Mammary epithelial cell (primary cell): ENCODE measurements at regions of chr2 and their contacts with region 1.

Region 1: DNA sequence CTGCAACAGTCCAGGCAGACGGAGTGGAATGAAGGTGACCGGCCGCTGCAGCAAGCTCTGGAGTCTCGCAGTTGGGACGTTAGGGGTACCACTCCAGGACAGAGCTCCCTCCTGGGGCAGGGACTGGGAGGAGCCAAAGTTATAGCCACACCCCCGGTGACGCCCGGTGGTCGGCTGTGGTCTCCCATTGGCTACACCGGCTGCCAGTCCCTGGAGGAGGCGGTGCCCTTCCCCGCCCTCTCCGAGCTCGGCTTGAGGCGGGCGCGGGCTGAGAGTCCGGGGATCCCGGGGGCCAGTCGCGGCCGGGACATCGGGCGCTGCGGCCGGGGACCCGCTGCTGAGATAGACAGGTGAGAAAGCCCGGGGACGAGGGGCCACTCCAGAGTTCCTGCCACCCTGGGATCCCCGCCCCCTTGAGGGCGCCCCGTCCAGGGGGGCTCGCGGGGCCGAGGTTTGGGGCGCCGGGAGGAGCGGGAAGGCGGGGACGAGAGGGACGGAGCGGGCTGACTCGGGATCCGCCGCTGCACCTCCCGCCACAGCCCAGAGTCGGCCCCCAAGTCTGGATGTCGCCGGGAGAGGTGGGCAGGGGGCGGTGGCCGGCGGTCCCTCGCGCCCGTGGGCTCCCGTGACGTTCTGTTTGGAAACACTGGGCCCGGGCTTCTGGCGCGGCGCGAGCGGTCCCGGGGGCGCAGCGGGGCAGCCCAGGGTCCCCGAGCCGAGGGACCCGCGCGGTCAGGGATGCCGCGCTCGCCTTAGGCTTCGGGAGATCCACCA is at the start of gene PLEKHH2:
- DNase-seq: peak; percentile 79
- H3K4me3 ChIP-seq: peak within 1 kb of the TSS; percentile 71 to 85 (median 76)
- H3K27ac ChIP-seq: no peak within 1 kb of the TSS
- H3K4me1 ChIP-seq: peaks cover 20% of the 10 kb centered on the region
- H3K27me3 ChIP-seq: no peaks in the 10 kb centered on the region
- CTCF ChIP-seq: peak in 1 of 2 donors; percentile 3
- total RNA-seq, gene PLEKHH2: 1.3 to 2.7 TPM

Region 2: DNA sequence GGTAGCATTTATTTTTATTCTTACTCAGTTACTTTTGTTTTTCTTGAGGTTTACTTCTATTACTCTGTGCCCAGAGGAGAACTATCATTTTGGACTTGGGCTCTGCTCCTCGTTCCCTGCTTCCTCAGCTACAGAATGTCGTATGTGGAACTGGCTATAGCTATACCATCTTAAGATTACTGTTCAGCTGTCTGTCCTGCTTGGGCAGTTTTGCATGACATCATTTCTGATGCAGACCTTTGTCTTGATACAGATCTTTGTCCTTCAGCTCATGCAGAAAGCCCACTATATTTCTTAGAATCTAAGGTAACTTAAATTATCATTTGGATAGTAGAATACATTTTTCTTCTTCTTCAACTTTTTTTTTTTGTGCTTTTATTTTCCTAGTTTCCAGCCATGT is 52.8 kb after region 1 on chr2:
- CTCF ChIA-PET with region 1: no interaction called
- dilution Hi-C with region 1: no loop called
- in situ Hi-C with region 1: no loop called
- intact Hi-C with region 1: no loop called
- DNase-seq: no peak
- H3K4me3 ChIP-seq: no peak overlapping the region
- H3K27ac ChIP-seq: no peak overlapping the region
- H3K4me1 ChIP-seq: no peaks in the 10 kb centered on the region
- H3K27me3 ChIP-seq: peaks cover 4% of the 10 kb centered on the region
- CTCF ChIP-seq: no peak

Region 3: DNA sequence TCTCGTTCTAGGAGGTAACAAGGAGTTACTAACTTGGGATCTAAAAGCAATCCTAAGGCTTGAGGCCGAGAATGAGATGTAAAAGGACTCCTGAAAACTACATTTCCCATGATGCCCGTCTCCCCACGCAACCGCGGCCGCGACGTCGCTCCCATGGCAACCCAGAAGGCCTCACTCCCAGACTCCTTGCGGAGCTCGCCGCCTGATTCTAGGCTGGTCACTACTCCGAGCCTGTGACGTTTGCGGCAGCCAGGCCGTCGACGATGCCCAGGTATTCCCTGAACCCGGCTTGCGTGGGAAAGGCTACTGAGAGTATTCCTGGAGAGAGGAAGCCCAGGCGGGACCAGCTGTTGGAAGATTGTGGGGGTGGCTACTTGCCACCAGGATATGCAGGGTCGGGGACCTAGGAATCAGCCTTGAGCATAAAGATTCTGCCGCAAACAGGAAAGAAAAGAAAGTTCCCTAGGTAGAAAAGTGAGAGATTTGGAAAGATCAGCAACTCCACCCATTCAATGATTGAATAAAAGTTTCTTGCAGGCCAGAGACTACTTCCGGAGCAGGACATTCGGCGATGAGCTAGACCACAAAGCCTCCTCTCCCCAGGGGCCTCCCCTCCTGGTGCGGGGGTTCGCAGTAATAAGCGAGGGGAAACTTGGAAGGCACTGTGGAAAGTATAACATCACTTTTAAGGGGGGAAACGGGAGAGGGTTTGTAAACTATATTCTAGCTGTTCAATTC is 136.8 kb after region 1 on chr2 and contains the start of gene DYNC2LI1:
- CTCF ChIA-PET with region 1: no interaction called
- dilution Hi-C with region 1: no loop called
- in situ Hi-C with region 1: no loop called
- intact Hi-C with region 1: loop called (anchors 5 kb)
- DNase-seq: peak; percentile 89
- H3K4me3 ChIP-seq: peak within 1 kb of the TSS; percentile 63 to 80 (median 74)
- H3K27ac ChIP-seq: peak within 1 kb of the TSS; percentile 88
- H3K4me1 ChIP-seq: no peaks in the 10 kb centered on the region
- H3K27me3 ChIP-seq: no peaks in the 10 kb centered on the region
- CTCF ChIP-seq: no peak
- total RNA-seq, gene DYNC2LI1: 15.6 to 16.2 TPM

Region 4: GRCh38 chr2:44218771-44219170 is 581.6 kb after region 1 on chr2:
- CTCF ChIA-PET with region 1: no interaction called
- dilution Hi-C with region 1: no loop called
- in situ Hi-C with region 1: no loop called
- intact Hi-C with region 1: no loop called
- DNase-seq: no peak
- H3K4me3 ChIP-seq: no peak overlapping the region
- H3K27ac ChIP-seq: no peak overlapping the region
- H3K4me1 ChIP-seq: no peaks in the 10 kb centered on the region
- H3K27me3 ChIP-seq: no peaks in the 10 kb centered on the region
- CTCF ChIP-seq: no peak